ENCODE measurements at regions of chr21 and their contacts with region 1.

Region 1: DNA sequence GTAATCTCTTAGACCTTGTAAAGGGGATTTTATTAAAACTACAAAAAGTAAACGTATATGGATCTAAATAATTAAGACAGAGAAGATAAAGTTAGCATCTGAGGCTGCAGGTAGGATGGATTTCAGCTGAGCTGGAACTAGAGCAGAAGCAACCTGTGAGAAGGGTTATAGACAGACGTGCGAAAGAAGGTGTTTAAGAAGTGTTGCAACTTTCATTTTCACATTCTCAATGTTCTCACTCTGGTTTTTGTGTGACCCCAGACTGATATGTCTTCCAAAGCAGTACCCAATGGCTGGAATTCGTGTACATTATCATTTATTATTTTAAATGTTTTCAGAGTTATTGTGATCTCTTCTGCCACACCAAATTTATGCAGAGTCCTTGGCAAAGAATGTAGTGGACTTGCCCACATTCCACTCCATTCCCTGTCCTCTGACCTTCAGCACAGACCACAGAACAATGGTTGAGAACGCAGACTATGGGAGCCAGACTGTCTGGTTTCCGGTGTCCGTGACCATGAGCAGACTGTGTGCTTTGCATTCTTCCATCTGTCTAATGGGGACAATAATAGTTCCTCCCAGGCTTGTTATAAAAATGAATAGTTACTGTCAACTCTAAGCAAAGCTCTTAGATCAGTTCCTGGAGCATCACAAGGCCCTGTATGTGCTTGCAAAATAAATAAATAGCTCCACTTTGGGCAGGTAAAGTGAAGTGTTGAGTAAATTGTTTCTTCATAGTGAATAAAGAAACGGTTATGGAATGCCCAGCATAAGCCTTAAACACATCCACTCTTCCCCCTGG is 140.6 kb upstream of the SAMSN1 start:
- DNase-seq: peak in 1 of 35 experiments; percentile 21
- ATAC-seq: peak in 2 of 4 experiments; percentile 55 to 71
- H3K4me3 ChIP-seq: no peak overlapping the region
- H3K4me3 Mint-ChIP-seq: peak overlapping the region; percentile 51 to 62 (median 52)
- H3K27ac ChIP-seq: peak overlapping the region; percentile 18
- H3K27ac Mint-ChIP-seq: peak overlapping the region; percentile 70 to 74
- H3K4me1 ChIP-seq: peaks cover 0 to 7% of the 10 kb centered on the region in 2 experiments
- H3K4me1 Mint-ChIP-seq: peaks cover 33 to 42% (median 42%) of the 10 kb centered on the region in 3 donors
- H3K27me3 ChIP-seq: no peaks in the 10 kb centered on the region
- H3K27me3 Mint-ChIP-seq: no peaks in the 10 kb centered on the region

Region 2: GRCh38 chr21:14675774-14676530 is 10.7 kb before region 1 on chr21:
- CTCF ChIA-PET with region 1: interaction called in 1 of 2 experiments, 10 read pairs
- POLR2A ChIA-PET with region 1: no interaction called
- DNase-seq: peak in 30 of 35 experiments; percentile 0 to 70 (median 10)
- ATAC-seq: peak; percentile 93 to 95 (median 94)
- H3K4me3 ChIP-seq: peak overlapping the region; percentile 5 to 13
- H3K4me3 Mint-ChIP-seq: peak overlapping the region; percentile 51 to 76 (median 59)
- H3K27ac ChIP-seq: peak overlapping the region; percentile 95
- H3K27ac Mint-ChIP-seq: peak overlapping the region; percentile 98 to 100
- H3K4me1 ChIP-seq: peaks cover 16 to 27% of the 10 kb centered on the region in 2 experiments
- H3K4me1 Mint-ChIP-seq: peaks cover 49 to 59% (median 56%) of the 10 kb centered on the region in 3 donors
- H3K27me3 ChIP-seq: no peaks in the 10 kb centered on the region
- H3K27me3 Mint-ChIP-seq: no peaks in the 10 kb centered on the region